ENCODE measurements at regions of chr12 and their contacts with region 1.

Region 1: GRCh38 chr12:46682148-46682547 is 143.6 kb downstream of the SLC38A4 start:
- DNase-seq: no peak
- ATAC-seq: peak in 1 of 4 donors; percentile 38
- H3K4me3 ChIP-seq: no peak overlapping the region
- H3K27ac ChIP-seq: no peak overlapping the region
- H3K4me1 ChIP-seq: peaks cover 22% of the 10 kb centered on the region
- H3K27me3 ChIP-seq: no peaks in the 10 kb centered on the region
- CTCF ChIP-seq: no peak

Region 2: GRCh38 chr12:46824709-46825108 is 142.6 kb after region 1 on chr12:
- intact Hi-C with region 1: loop called in 1 of 2 experiments (anchors 5 kb)
- DNase-seq: no peak
- ATAC-seq: no peak
- H3K4me3 ChIP-seq: peak overlapping the region; percentile 60
- H3K27ac ChIP-seq: no peak overlapping the region
- H3K4me1 ChIP-seq: peaks cover 14% of the 10 kb centered on the region
- H3K27me3 ChIP-seq: no peaks in the 10 kb centered on the region
- CTCF ChIP-seq: no peak

Region 3: DNA sequence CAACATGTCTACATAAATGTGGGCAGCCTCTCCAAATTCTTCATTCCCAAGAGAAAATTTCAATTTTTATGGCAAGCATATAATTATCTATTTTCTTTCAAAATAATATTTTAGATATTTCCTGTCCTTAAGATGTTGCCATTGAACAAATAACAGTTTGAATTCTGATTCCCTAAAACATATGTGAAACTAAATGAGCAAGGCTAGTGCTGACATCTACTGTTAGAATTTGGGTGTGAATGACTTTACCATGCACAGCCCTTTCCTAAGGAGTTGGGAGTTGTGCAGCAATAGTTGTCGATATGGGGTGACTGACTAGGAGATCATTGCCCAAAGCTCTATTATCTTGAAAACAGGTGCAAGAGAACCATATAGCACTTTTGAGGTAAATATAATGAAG is 251.8 kb after region 1 on chr12:
- intact Hi-C with region 1: loop called (anchors 2 to 5 kb)
- DNase-seq: no peak
- ATAC-seq: peak; percentile 74 to 95 (median 84)
- H3K4me3 ChIP-seq: no peak overlapping the region
- H3K27ac ChIP-seq: no peak overlapping the region
- H3K4me1 ChIP-seq: peaks cover 4% of the 10 kb centered on the region
- H3K27me3 ChIP-seq: no peaks in the 10 kb centered on the region
- CTCF ChIP-seq: peak; percentile 68

Region 4: GRCh38 chr12:47397664-47398281 is 715.6 kb after region 1 on chr12:
- intact Hi-C with region 1: no loop called
- DNase-seq: no peak
- ATAC-seq: peak in 3 of 4 donors; percentile 61 to 69 (median 66)
- H3K4me3 ChIP-seq: no peak overlapping the region
- H3K27ac ChIP-seq: no peak overlapping the region
- H3K4me1 ChIP-seq: peaks cover 10% of the 10 kb centered on the region
- H3K27me3 ChIP-seq: no peaks in the 10 kb centered on the region
- CTCF ChIP-seq: peak; percentile 43